ENCODE measurements at regions of chr16 and their contacts with region 1.

Region 1: GRCh38 chr16:72664509-72665225 is 383.3 kb downstream of the ZFHX3 start:
- DNase-seq: peak; percentile 91
- H3K4me3 Mint-ChIP-seq: peak overlapping the region; percentile 99
- H3K27ac Mint-ChIP-seq: peak overlapping the region; percentile 96
- H3K4me1 Mint-ChIP-seq: peaks cover 38% of the 10 kb centered on the region
- H3K27me3 Mint-ChIP-seq: peaks cover 3% of the 10 kb centered on the region

Region 2: GRCh38 chr16:71288890-71289733 is 1375.6 kb before region 1 on chr16 and contains the start of gene CMTR2:
- intact Hi-C with region 1: loop called (anchors 5 kb)
- DNase-seq: peak; percentile 89
- H3K4me3 Mint-ChIP-seq: peak within 1 kb of the TSS; percentile 93
- H3K27ac Mint-ChIP-seq: peak within 1 kb of the TSS; percentile 90
- H3K4me1 Mint-ChIP-seq: peaks cover 26% of the 10 kb centered on the region
- H3K27me3 Mint-ChIP-seq: peaks cover 13% of the 10 kb centered on the region
- total RNA-seq, gene CMTR2: 18.2 and 20.7 TPM in 2 replicates

Region 3: GRCh38 chr16:72008424-72009216 is 656.0 kb before region 1 on chr16 and contains the start of gene DHODH:
- intact Hi-C with region 1: loop called (anchors 2 kb)
- DNase-seq: peak; percentile 98
- H3K4me3 Mint-ChIP-seq: peak within 1 kb of the TSS; percentile 99
- H3K27ac Mint-ChIP-seq: peak within 1 kb of the TSS; percentile 99
- H3K4me1 Mint-ChIP-seq: peaks cover 16% of the 10 kb centered on the region
- H3K27me3 Mint-ChIP-seq: no peaks in the 10 kb centered on the region
- total RNA-seq, gene DHODH: 31.0 and 33.1 TPM in 2 replicates

Region 4: DNA sequence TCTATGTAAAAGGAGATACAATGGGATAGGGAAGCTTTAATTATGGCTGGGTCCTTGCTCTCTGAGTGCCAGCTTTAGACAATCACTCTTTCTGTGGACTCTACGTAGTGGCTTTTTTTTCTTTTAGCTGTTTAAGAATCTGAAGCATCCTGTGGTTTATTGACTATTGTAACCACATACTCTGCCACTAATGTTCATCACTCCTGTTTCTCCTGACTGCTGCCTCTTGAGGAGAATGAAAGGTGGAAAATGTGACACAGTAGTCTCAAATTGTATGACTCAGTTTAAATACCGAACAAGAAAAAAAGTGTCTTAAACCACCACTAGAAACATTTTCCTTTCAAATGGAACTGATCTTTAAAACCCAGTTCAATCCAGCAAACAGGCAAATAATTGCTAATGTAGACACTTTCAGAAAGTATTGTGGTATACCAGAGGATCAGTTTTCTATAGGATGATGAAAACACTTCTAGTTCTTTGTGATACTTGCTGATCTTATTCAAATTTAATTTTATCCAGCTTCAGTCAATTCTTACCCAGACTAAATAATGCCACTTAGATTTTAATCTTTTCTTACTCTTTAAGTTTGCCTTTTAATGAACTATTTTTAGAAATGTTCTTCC is 190.1 kb before region 1 on chr16:
- intact Hi-C with region 1: loop called (anchors 2 kb)
- DNase-seq: no peak
- H3K4me3 Mint-ChIP-seq: no peak overlapping the region
- H3K27ac Mint-ChIP-seq: peak overlapping the region; percentile 46
- H3K4me1 Mint-ChIP-seq: peaks cover 20% of the 10 kb centered on the region
- H3K27me3 Mint-ChIP-seq: no peaks in the 10 kb centered on the region

Region 5: GRCh38 chr16:73058221-73058615 is 393.6 kb after region 1 on chr16:
- intact Hi-C with region 1: loop called (anchors 10 kb)
- DNase-seq: peak; percentile 17
- H3K4me3 Mint-ChIP-seq: no peak overlapping the region
- H3K27ac Mint-ChIP-seq: no peak overlapping the region
- H3K4me1 Mint-ChIP-seq: peaks cover 20% of the 10 kb centered on the region
- H3K27me3 Mint-ChIP-seq: peaks cover 39% of the 10 kb centered on the region

Measured in activated T-helper 1 cell treated with anti-CD3 and anti-CD28 coated beads, Interleukin-12 subunit alpha, Interleukin-12 subunit beta, Interleukin-2, Interleukin-4 antibody, amounts not matched to agents 30 ng/mL and 10 ng/mL and 1 ng/mL, durations not matched to agents 14 hours and 24 hours and 36 hours (primary cell).